Activated B cell treated with CpG ODN at 0.5 μM for 24 hours (primary cell): ENCODE measurements at regions of chr19 and their contacts with region 1.

Region 1: GRCh38 chr19:58002384-58003173 is at the start of gene ZNF606:
- DNase-seq: peak; percentile 87
- ATAC-seq: peak; percentile 97
- H3K4me3 Mint-ChIP-seq: peak within 1 kb of the TSS; percentile 88
- H3K27ac Mint-ChIP-seq: peak within 1 kb of the TSS; percentile 87
- H3K4me1 Mint-ChIP-seq: peaks cover 38% of the 10 kb centered on the region
- H3K27me3 Mint-ChIP-seq: no peaks in the 10 kb centered on the region
- CTCF ChIP-seq: no peak
- total RNA-seq, gene ZNF606: 27.8 and 32.9 TPM in 2 replicates

Region 2: GRCh38 chr19:57708641-57709361 is 293.8 kb before region 1 on chr19 and contains the start of gene ZNF154:
- CTCF ChIA-PET with region 1: no interaction called
- POLR2A ChIA-PET with region 1: no interaction called
- intact Hi-C with region 1: no loop called
- DNase-seq: peak; percentile 56
- ATAC-seq: peak; percentile 93
- H3K4me3 Mint-ChIP-seq: peak within 1 kb of the TSS; percentile 93
- H3K27ac Mint-ChIP-seq: peak within 1 kb of the TSS; percentile 93
- H3K4me1 Mint-ChIP-seq: peaks cover 46% of the 10 kb centered on the region
- H3K27me3 Mint-ChIP-seq: no peaks in the 10 kb centered on the region
- CTCF ChIP-seq: no peak
- total RNA-seq, gene ZNF154: 23.2 and 27.9 TPM in 2 replicates

Region 3: DNA sequence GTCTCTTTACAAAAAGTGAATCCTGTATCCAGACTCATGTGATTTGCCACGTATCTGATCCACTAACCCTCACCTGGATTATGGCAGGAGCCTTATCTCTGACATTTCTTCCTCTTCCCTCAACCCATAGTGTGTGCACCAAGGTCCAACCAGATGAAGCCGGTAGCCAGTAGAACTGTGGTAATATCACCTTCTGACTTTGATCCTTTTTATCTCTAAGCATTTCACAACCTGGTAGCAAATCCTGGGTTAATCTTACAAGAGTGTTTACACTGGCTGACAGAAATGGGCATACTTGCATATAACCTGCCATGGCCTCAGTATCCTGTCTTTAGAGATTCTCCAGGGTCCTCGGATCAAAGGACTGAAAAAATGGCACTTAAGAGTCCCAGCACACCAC is 88.0 kb before region 1 on chr19:
- CTCF ChIA-PET with region 1: no interaction called
- POLR2A ChIA-PET with region 1: interaction called, 14 read pairs
- intact Hi-C with region 1: loop called (anchors 1 kb)
- DNase-seq: no peak
- ATAC-seq: no peak
- H3K4me3 Mint-ChIP-seq: peak overlapping the region; percentile 94
- H3K27ac Mint-ChIP-seq: no peak overlapping the region
- H3K4me1 Mint-ChIP-seq: peaks cover 34% of the 10 kb centered on the region
- H3K27me3 Mint-ChIP-seq: no peaks in the 10 kb centered on the region
- CTCF ChIP-seq: no peak

Region 4: GRCh38 chr19:58059003-58059670 is 56.6 kb after region 1 on chr19 and contains the start of gene ZNF135:
- CTCF ChIA-PET with region 1: no interaction called
- POLR2A ChIA-PET with region 1: interaction called, 41 read pairs
- intact Hi-C with region 1: loop called (anchors 2 kb)
- DNase-seq: peak; percentile 78
- ATAC-seq: peak; percentile 93
- H3K4me3 Mint-ChIP-seq: peak within 1 kb of the TSS; percentile 85
- H3K27ac Mint-ChIP-seq: peak within 1 kb of the TSS; percentile 87
- H3K4me1 Mint-ChIP-seq: peaks cover 9% of the 10 kb centered on the region
- H3K27me3 Mint-ChIP-seq: peaks cover 13% of the 10 kb centered on the region
- CTCF ChIP-seq: no peak
- total RNA-seq, gene ZNF135: 5.8 and 7.5 TPM in 2 replicates

Region 5: DNA sequence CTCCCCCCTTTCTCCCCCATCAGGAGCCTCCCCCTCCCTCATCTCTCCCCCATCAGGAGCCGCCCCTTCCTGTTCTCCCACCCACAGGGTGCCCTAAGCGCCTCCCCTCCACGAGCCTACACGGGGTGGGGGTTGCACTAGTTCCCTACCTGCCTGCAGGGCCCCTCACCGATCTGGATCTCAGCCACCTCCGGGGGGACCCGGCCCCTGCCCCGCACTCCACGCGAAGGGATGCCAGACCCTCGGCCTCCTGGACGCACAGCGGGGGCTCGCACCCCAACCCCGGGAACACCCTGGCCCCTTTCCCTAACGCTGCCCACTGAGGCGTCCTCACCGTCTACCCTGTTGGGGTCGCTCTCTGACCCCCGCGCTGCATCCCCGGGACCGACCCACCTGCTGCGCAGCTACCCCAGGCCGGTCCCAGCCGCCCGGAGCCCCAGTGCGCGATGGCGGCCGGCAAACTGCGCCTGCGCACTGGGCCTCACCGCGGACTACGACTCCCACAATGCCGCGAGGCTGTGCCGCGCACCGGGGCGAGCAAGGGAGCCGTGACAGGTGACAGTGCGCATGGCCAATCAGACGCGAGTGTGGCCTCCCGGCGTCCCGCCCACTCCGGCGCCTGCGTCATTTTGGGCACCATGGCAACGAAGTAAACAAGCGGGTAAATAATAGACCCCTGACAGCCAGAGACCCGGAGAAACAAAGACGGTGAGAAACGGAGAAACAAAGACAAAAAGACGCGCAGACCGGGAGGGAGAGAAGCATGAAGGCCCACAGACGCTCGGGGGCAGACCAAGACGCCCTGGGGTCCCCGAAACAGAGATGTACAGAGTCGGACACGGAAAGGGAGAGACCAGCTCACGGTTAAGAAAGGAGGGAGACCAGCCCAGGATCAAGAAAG is 95.5 kb after region 1 on chr19 and contains the start of gene ZSCAN18:
- CTCF ChIA-PET with region 1: no interaction called
- POLR2A ChIA-PET with region 1: interaction called, 5 read pairs
- intact Hi-C with region 1: loop called (anchors 5 kb)
- DNase-seq: peak; percentile 98
- ATAC-seq: peak; percentile 93
- H3K4me3 Mint-ChIP-seq: peak within 1 kb of the TSS; percentile 90
- H3K27ac Mint-ChIP-seq: peak within 1 kb of the TSS; percentile 100
- H3K4me1 Mint-ChIP-seq: peaks cover 18% of the 10 kb centered on the region
- H3K27me3 Mint-ChIP-seq: no peaks in the 10 kb centered on the region
- CTCF ChIP-seq: no peak
- total RNA-seq, gene ZSCAN18: 40.8 and 49.8 TPM in 2 replicates

Region 6: DNA sequence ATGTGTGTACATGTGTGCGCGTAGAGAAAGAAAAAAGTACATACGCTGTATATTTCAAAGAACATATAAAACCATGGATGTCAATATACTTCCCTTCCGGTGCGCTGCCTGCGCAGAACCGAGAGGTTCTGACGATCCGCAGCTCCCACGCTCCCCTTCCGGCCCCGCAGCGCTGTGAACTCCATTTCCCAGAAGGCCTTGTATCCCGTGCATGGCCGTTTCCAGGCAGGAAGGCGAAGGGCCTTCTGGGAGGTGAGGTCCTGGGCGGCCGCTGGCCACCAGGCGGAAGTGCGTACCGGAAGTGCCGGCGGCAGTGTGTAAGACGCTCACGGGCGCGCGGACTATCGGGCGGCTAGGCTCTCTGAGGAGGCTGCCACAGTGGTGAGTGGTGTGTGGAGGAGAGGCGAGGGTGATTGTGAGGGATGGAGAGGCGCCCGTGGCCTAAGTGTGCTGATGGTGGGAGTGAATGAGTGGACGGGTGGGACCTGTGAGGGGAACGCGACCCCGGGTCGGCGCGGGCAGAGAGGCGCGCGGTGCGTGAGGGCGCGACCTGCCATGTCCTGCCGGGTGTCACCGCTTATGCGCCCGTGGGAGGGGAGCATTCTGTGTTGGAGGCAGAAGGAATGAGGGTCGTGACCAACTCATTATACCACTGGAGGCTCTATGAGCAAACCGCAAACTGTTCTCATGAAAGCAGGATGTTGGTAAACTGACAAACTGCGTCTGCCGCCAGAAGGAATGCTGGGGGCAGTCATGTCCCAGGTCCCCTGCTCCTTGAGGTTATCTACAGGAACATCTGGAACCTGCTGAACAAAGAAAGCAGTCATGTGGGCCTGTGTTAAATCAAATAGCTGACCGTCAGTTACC is 302.7 kb after region 1 on chr19 and contains the start of gene ERVK3-1:
- CTCF ChIA-PET with region 1: no interaction called
- POLR2A ChIA-PET with region 1: no interaction called
- intact Hi-C with region 1: loop called (anchors 10 kb)
- DNase-seq: peak; percentile 89
- ATAC-seq: peak; percentile 97
- H3K4me3 Mint-ChIP-seq: peak within 1 kb of the TSS; percentile 100
- H3K27ac Mint-ChIP-seq: peak within 1 kb of the TSS; percentile 98
- H3K4me1 Mint-ChIP-seq: peaks cover 38% of the 10 kb centered on the region
- H3K27me3 Mint-ChIP-seq: no peaks in the 10 kb centered on the region
- CTCF ChIP-seq: no peak
- total RNA-seq, gene ERVK3-1: 61.4 and 74.3 TPM in 2 replicates

Region 7: DNA sequence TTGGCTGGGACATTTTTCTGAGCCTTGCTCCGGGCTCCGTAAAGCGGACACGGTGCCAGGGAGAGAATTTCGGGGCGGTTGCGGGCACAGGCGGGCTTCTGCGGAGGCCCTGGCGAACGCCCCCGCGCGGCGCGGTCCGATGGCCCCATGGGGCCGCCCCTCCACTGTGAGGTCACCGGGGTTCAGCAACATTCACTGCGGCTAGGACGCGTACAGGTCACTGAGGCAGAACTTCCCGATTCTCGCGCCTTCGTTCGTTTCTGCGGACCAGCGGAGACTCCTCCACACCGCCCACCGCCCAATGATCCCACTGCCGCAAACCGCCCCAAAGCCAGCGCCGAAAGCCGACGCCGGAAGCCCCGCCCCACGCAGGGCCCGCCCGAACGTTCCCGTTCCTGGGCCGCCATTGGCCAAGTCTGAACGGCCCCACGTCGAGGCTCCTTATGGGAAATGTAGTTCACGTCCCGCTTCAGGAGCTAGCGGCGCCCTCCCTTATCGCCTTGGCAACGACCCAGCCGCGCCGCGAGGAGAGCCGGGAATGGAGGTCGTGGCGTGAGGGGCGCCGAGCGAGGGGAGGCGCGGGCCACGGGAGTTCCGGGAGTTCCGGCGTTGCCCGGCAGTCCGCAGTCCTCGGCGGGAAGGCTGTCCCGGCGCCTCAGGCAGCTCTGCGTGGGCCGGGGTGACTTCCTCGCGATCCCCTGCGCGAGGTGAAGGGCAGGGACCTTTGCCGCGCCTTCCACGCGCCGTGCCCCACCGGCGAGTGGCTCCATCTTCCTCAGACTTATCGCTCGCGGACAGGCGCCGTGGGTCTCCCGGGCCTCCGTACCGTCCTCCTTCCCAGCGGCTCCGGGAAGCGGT is 405.8 kb after region 1 on chr19 and contains the start of gene ZNF584:
- CTCF ChIA-PET with region 1: no interaction called
- POLR2A ChIA-PET with region 1: no interaction called
- intact Hi-C with region 1: no loop called
- DNase-seq: peak; percentile 93
- ATAC-seq: peak; percentile 95
- H3K4me3 Mint-ChIP-seq: peak within 1 kb of the TSS; percentile 95
- H3K27ac Mint-ChIP-seq: peak within 1 kb of the TSS; percentile 92
- H3K4me1 Mint-ChIP-seq: peaks cover 32% of the 10 kb centered on the region
- H3K27me3 Mint-ChIP-seq: no peaks in the 10 kb centered on the region
- CTCF ChIP-seq: no peak
- total RNA-seq, gene ZNF584: 8.6 and 9.6 TPM in 2 replicates